ENCODE measurements at regions of chr6 and their contacts with region 1.

Region 1: GRCh38 chr6:18595774-18596530 is 208.8 kb downstream of the RNF144B start:
- DNase-seq: peak; percentile 5
- H3K4me3 ChIP-seq: no peak overlapping the region
- H3K27me3 ChIP-seq: no peaks in the 10 kb centered on the region; the same call in 1 of the 2 replicates
- CTCF ChIP-seq: peak; percentile 97

Region 2: GRCh38 chr6:18845891-18846290 is 249.9 kb after region 1 on chr6:
- CTCF ChIA-PET with region 1: no interaction called
- POLR2A ChIA-PET with region 1: no interaction called
- DNase-seq: no peak
- H3K4me3 ChIP-seq: no peak overlapping the region
- H3K27me3 ChIP-seq: no peaks in the 10 kb centered on the region
- CTCF ChIP-seq: no peak

Region 3: GRCh38 chr6:20056350-20056992 is 1460.5 kb after region 1 on chr6:
- CTCF ChIA-PET with region 1: interaction called, 16 read pairs
- POLR2A ChIA-PET with region 1: no interaction called
- DNase-seq: no peak
- H3K4me3 ChIP-seq: no peak overlapping the region
- H3K27me3 ChIP-seq: peaks cover 1% of the 10 kb centered on the region; the same call in 1 of the 2 replicates
- CTCF ChIP-seq: peak; percentile 58